Activated CD8-positive, alpha-beta memory T cell treated with anti-CD3 and anti-CD28 coated beads, Interleukin-2, amount 10 ng/mL, durations not matched to agents 7 days and 5 days (primary cell): ENCODE measurements at regions of chr6 and their contacts with region 1.

Region 1: DNA sequence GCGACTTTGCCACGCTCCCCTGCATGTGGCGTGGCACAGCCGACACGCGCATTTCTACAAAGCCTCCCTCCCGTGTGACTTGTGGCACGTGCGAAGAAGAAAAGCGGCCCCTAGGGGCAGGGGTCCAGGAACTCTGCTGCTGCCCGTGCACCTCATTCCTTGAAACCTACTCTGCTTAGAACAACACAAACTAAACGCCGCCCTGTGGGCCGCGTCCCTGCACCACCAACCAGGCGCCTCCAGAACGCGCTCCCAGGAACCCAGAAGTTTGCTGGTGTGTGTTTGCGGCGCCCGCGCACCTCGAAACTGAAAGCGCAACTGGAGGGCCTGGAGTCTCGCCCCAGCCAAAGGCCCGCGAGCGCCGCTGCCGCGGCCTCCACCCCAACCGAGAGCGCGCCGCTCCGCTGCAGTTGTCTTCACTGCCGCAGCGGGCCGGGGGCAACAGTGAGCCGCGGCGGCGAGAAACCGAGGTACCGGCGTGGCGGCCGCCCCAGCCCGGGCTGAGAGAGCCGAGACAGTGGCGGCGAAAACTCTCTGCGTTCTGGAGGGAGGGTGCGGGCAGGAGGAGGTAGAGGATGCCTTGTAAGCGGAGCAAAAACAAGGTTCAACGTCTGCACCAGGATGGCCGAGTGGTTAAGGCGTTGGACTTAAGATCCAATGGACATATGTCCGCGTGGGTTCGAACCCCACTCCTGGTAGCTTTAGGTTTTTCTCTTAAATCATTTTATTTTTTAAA is 65.8 kb downstream of the STX11 start:
- DNase-seq: peak; percentile 94
- ATAC-seq: peak; percentile 94
- H3K4me3 Mint-ChIP-seq: peak overlapping the region; percentile 82
- H3K27ac Mint-ChIP-seq: peak overlapping the region; percentile 91
- H3K4me1 Mint-ChIP-seq: peaks cover 30% of the 10 kb centered on the region
- H3K27me3 Mint-ChIP-seq: peaks cover 10% of the 10 kb centered on the region

Region 2: GRCh38 chr6:144095331-144096002 is 120.6 kb before region 1 on chr6 and contains the start of gene SF3B5:
- CTCF ChIA-PET with region 1: interaction called, 18 read pairs
- DNase-seq: peak; percentile 99
- ATAC-seq: peak; percentile 96
- H3K4me3 Mint-ChIP-seq: peak within 1 kb of the TSS; percentile 98
- H3K27ac Mint-ChIP-seq: peak within 1 kb of the TSS; percentile 97
- H3K4me1 Mint-ChIP-seq: peaks cover 34% of the 10 kb centered on the region
- H3K27me3 Mint-ChIP-seq: no peaks in the 10 kb centered on the region
- total RNA-seq, gene SF3B5: 151 to 176 TPM

Region 3: DNA sequence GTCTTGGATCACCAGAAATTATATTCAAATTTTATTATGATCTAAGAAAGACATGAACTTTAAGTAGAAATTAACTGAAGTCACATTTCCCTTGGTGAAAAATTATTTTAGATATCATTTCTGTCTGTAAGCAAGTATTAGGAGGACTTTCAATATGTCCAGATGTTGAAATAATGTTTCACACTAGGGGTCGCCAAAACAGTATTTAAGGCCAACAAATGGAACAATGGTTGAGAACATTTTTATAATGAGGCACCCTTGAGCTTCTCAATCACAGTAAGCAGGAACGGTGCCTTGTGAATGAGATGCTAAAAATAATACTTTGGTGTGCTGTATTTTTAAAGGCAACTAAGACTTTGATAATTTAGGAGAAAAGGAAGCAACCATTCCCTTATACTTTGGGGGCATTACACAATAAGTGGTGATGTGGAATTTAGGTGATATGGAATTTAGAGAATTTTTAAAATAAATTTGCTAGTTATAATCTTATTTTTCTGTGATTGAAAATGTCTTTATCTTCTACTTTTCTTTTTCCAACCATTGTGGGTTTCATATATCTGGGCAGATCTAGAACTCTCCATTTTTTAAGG is 111.1 kb before region 1 on chr6:
- CTCF ChIA-PET with region 1: interaction called, 44 read pairs
- DNase-seq: no peak
- ATAC-seq: peak; percentile 73
- H3K4me3 Mint-ChIP-seq: no peak overlapping the region
- H3K27ac Mint-ChIP-seq: no peak overlapping the region
- H3K4me1 Mint-ChIP-seq: peaks cover 10% of the 10 kb centered on the region
- H3K27me3 Mint-ChIP-seq: no peaks in the 10 kb centered on the region

Region 4: GRCh38 chr6:144469144-144469575 is 253.1 kb after region 1 on chr6:
- CTCF ChIA-PET with region 1: no interaction called
- DNase-seq: no peak
- ATAC-seq: peak; percentile 83
- H3K4me3 Mint-ChIP-seq: peak overlapping the region; percentile 41
- H3K27ac Mint-ChIP-seq: peak overlapping the region; percentile 75
- H3K4me1 Mint-ChIP-seq: peaks cover 24% of the 10 kb centered on the region
- H3K27me3 Mint-ChIP-seq: no peaks in the 10 kb centered on the region